Aorta (tissue), 5 donors: ENCODE measurements at regions of chr20 and their contacts with region 1.

Region 1: DNA sequence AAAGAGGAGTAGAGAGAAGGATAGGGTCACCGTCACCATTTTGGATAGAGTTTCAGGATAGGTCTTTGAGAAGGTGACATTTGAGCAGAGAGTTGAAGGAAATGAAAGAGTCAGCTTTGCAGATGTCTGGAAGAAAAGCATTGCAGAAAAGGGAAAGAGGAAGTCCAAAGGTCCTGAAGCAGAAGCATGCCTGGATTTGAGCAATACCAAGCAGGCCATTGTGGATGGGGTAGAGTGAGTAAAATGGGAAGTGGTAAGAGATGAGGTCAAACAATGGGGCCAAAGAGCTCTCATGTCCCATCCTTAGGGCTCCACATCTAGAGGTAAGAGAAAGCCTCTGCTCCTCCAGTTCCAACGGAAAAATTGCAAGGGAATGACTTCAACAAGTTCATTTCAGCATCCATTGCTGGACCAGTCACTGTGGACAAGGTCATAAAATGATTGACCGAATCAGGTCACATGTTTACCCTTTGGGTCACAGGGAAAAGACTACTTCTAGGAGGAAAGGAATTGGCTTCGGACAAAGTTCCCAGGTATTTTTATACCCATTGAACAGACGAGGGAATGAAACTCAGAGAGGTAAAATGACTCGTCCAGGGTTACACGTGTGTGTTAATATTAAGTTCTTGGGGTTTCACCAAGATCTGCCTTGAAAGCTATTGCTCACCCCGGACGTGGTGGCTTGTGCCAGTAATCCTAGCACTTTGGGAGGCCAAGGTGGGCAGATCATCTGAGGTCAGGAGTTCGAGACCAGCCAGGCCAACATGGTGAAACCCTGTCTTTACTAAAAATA is 6.6 kb upstream of the SAMHD1 start:
- DNase-seq: peak in 1 of 2 donors; percentile 21
- ATAC-seq: peak; percentile 61
- H3K4me3 ChIP-seq: no peak overlapping the region
- H3K27ac ChIP-seq: no peak overlapping the region
- H3K4me1 ChIP-seq: no peaks in the 10 kb centered on the region
- H3K27me3 ChIP-seq: no peaks in the 10 kb centered on the region

Region 2: GRCh38 chr20:36454698-36455427 is 503.2 kb before region 1 on chr20:
- intact Hi-C with region 1: loop called in 1 of 2 experiments (anchors 5 kb)
- DNase-seq: peak in 1 of 2 donors; percentile 80
- ATAC-seq: peak; percentile 51
- H3K4me3 ChIP-seq: no peak overlapping the region
- H3K27ac ChIP-seq: peak overlapping the region in 1 of 2 donors; percentile 3
- H3K4me1 ChIP-seq: no peaks in the 10 kb centered on the region
- H3K27me3 ChIP-seq: no peaks in the 10 kb centered on the region